K562 (cell line): ENCODE measurements at regions of chr7 and their contacts with region 1.

Region 1: GRCh38 chr7:117127585-117128168 is 174.4 kb downstream of the ST7 start:
- DNase-seq: peak; percentile 34 to 80 (median 55)
- ATAC-seq: peak; percentile 79
- H3K4me3 ChIP-seq: no peak overlapping the region
- H3K27ac ChIP-seq: no peak overlapping the region
- H3K4me1 ChIP-seq: peaks cover 0 to 15% of the 10 kb centered on the region in 2 experiments; a peak in 3 of 5 replicates
- H3K27me3 ChIP-seq: no peaks in the 10 kb centered on the region
- CTCF ChIP-seq: peak; percentile 57 to 90 (median 70); a peak in 5 of 6 replicates
- EP300 ChIP-seq: no peak
- POLR2A ChIP-seq: no peak
- RAD21 ChIP-seq: peak; percentile 82 to 90

Region 2: DNA sequence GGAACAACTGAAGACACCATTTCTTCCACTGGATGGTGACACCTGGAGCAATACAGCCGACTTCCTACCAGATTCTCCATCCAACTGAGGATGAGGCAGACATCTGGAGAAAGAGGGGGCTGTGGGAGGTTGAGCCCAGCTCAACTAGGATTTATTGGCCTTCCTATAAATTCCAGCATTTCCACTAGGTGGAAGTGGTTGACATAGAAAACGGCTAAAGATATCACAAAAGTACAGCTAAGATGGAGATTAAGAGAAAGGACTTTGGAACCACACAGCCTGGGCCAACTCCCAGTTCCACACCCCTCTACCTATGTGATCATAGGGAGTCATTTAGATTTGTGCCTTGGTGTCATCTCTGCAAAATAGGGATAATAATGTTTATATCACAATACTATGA is 689.4 kb before region 1 on chr7:
- CTCF ChIA-PET with region 1: no interaction called
- POLR2A ChIA-PET with region 1: no interaction called
- in situ Hi-C with region 1: no loop called
- intact Hi-C with region 1: no loop called
- DNase-seq: peak in 2 of 4 experiments; percentile 20 to 49
- ATAC-seq: peak; percentile 79
- H3K4me3 ChIP-seq: no peak overlapping the region
- H3K27ac ChIP-seq: no peak overlapping the region
- H3K4me1 ChIP-seq: peaks cover 8 to 25% of the 10 kb centered on the region in 2 experiments; a peak in 3 of 5 replicates
- H3K27me3 ChIP-seq: no peaks in the 10 kb centered on the region; a peak in 1 of 5 replicates
- CTCF ChIP-seq: peak; percentile 32 to 71 (median 50); a peak in 4 of 6 replicates
- EP300 ChIP-seq: no peak
- POLR2A ChIP-seq: no peak
- RAD21 ChIP-seq: peak; percentile 70 to 80

Region 3: GRCh38 chr7:116828281-116828680 is 299.4 kb before region 1 on chr7:
- CTCF ChIA-PET with region 1: interaction called, 5 read pairs
- POLR2A ChIA-PET with region 1: no interaction called
- in situ Hi-C with region 1: no loop called
- intact Hi-C with region 1: loop called (anchors 5 kb)
- DNase-seq: no peak
- ATAC-seq: peak; percentile 67
- H3K4me3 ChIP-seq: no peak overlapping the region
- H3K27ac ChIP-seq: no peak overlapping the region
- H3K4me1 ChIP-seq: no peaks in the 10 kb centered on the region
- H3K27me3 ChIP-seq: peaks cover 4 to 18% of the 10 kb centered on the region in 2 experiments; a peak in 3 of 5 replicates
- CTCF ChIP-seq: peak; percentile 35 to 59 (median 46); a peak in 3 of 6 replicates
- EP300 ChIP-seq: no peak
- POLR2A ChIP-seq: no peak
- RAD21 ChIP-seq: peak in 1 of 2 experiments; percentile 36; a peak in 2 of 4 replicates

Region 4: GRCh38 chr7:116876664-116877442 is 250.8 kb before region 1 on chr7:
- CTCF ChIA-PET with region 1: no interaction called
- POLR2A ChIA-PET with region 1: no interaction called
- in situ Hi-C with region 1: no loop called
- intact Hi-C with region 1: loop called (anchors 5 kb)
- DNase-seq: peak; percentile 88 to 99 (median 92)
- ATAC-seq: peak; percentile 99
- H3K4me3 ChIP-seq: no peak overlapping the region; the same call in 1 of the 2 replicates
- H3K27ac ChIP-seq: peak overlapping the region; percentile 64
- H3K4me1 ChIP-seq: peaks cover 14 to 34% of the 10 kb centered on the region in 2 experiments
- H3K27me3 ChIP-seq: no peaks in the 10 kb centered on the region
- CTCF ChIP-seq: peak; percentile 68 to 83 (median 80)
- EP300 ChIP-seq: peak; percentile 100
- POLR2A ChIP-seq: no peak
- RAD21 ChIP-seq: peak; percentile 42 to 70; a peak in 3 of 4 replicates

Region 5: GRCh38 chr7:116963234-116963633 is 164.4 kb before region 1 on chr7:
- CTCF ChIA-PET with region 1: no interaction called
- POLR2A ChIA-PET with region 1: no interaction called
- in situ Hi-C with region 1: no loop called
- intact Hi-C with region 1: no loop called
- DNase-seq: no peak
- ATAC-seq: no peak
- H3K4me3 ChIP-seq: no peak overlapping the region
- H3K27ac ChIP-seq: no peak overlapping the region
- H3K4me1 ChIP-seq: peaks cover under 1 to 9% of the 10 kb centered on the region in 2 experiments; a peak in 2 of 5 replicates
- H3K27me3 ChIP-seq: no peaks in the 10 kb centered on the region
- CTCF ChIP-seq: no peak
- EP300 ChIP-seq: no peak
- POLR2A ChIP-seq: no peak
- RAD21 ChIP-seq: no peak

Region 6: GRCh38 chr7:117114272-117114671 is 13.4 kb before region 1 on chr7:
- CTCF ChIA-PET with region 1: interaction called, 4 read pairs
- POLR2A ChIA-PET with region 1: interaction called, 14 read pairs
- in situ Hi-C with region 1: no loop called
- intact Hi-C with region 1: no loop called
- DNase-seq: no peak
- ATAC-seq: no peak
- H3K4me3 ChIP-seq: no peak overlapping the region
- H3K27ac ChIP-seq: no peak overlapping the region
- H3K4me1 ChIP-seq: peaks cover 0 to 4% of the 10 kb centered on the region in 2 experiments; a peak in 2 of 5 replicates
- H3K27me3 ChIP-seq: no peaks in the 10 kb centered on the region
- CTCF ChIP-seq: no peak
- EP300 ChIP-seq: no peak
- POLR2A ChIP-seq: no peak
- RAD21 ChIP-seq: no peak

Region 7: DNA sequence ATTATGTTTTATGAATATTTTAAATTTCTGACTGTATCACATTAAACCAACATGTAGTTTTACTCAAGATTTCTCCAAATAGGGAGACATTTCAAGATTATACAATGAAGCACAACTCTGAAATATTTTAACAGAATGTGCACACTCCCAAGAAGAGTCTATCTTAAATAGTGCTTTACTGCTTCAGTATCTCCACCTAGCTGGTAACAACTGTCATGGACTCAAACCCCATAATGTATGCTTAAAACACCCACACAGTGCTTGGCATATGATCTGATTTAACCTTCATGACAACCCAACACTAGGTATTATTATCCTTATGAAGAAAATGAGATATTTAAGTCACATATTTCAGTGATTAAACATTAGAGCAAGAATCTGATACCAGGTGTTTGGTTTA is 253.7 kb after region 1 on chr7:
- CTCF ChIA-PET with region 1: no interaction called
- POLR2A ChIA-PET with region 1: no interaction called
- in situ Hi-C with region 1: no loop called
- intact Hi-C with region 1: no loop called
- DNase-seq: no peak
- ATAC-seq: peak; percentile 56; the same call in 1 of the 3 replicates
- H3K4me3 ChIP-seq: no peak overlapping the region
- H3K27ac ChIP-seq: no peak overlapping the region
- H3K4me1 ChIP-seq: no peaks in the 10 kb centered on the region
- H3K27me3 ChIP-seq: no peaks in the 10 kb centered on the region
- CTCF ChIP-seq: no peak
- EP300 ChIP-seq: no peak
- POLR2A ChIP-seq: no peak
- RAD21 ChIP-seq: peak in 1 of 2 experiments; percentile 28; a peak in 1 of 4 replicates

Region 8: DNA sequence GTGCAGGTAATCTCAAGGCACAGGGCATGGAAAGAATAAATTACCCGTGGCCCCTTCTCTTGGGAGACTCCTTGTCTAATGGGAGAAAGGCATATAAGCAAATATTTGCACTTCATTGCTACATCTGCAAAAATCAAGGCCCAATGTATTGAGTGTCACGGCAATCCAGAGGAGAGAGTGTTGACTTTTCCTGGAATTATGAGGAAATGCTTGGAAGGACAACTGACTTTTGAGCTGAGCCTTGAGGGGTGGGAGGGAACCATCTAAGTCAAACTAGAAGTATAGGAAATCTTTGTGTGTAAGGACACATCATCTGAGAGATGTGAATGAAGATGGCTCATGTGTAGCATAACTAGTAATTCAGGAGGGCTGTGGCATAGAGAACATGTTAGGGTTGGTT is 810.5 kb after region 1 on chr7:
- CTCF ChIA-PET with region 1: no interaction called
- POLR2A ChIA-PET with region 1: no interaction called
- in situ Hi-C with region 1: no loop called
- intact Hi-C with region 1: no loop called
- DNase-seq: no peak
- ATAC-seq: no peak
- H3K4me3 ChIP-seq: no peak overlapping the region
- H3K27ac ChIP-seq: no peak overlapping the region
- H3K4me1 ChIP-seq: no peaks in the 10 kb centered on the region
- H3K27me3 ChIP-seq: no peaks in the 10 kb centered on the region
- CTCF ChIP-seq: no peak
- EP300 ChIP-seq: no peak
- POLR2A ChIP-seq: no peak
- RAD21 ChIP-seq: no peak